Naive thymus-derived CD8-positive, alpha-beta T cell (primary cell): ENCODE measurements at regions of chr1 and their contacts with region 1.

Region 1: GRCh38 chr1:27357281-27358037 is 9.3 kb downstream of the MAP3K6 start:
- DNase-seq: peak; percentile 72 to 89 (median 82)
- ATAC-seq: peak; percentile 76 to 84
- H3K4me3 Mint-ChIP-seq: peak overlapping the region; percentile 74 to 86 (median 79)
- H3K27ac Mint-ChIP-seq: peak overlapping the region; percentile 53 to 95 (median 79)
- H3K4me1 Mint-ChIP-seq: peaks cover 16 to 52% (median 50%) of the 10 kb centered on the region in 4 donors
- H3K27me3 Mint-ChIP-seq: no peaks in the 10 kb centered on the region

Region 2: GRCh38 chr1:27292106-27292505 is 65.4 kb before region 1 on chr1:
- POLR2A ChIA-PET with region 1: no interaction called
- DNase-seq: no peak
- ATAC-seq: no peak
- H3K4me3 Mint-ChIP-seq: no peak overlapping the region
- H3K27ac Mint-ChIP-seq: peak overlapping the region in 2 of 10 donors; percentile 37 to 45
- H3K4me1 Mint-ChIP-seq: peaks cover 0 to 8% (median 6%) of the 10 kb centered on the region in 4 donors
- H3K27me3 Mint-ChIP-seq: no peaks in the 10 kb centered on the region

Region 3: GRCh38 chr1:27332536-27333281 is 24.8 kb before region 1 on chr1:
- POLR2A ChIA-PET with region 1: interaction called, 142 read pairs
- DNase-seq: peak; percentile 32 to 74 (median 62)
- ATAC-seq: peak; percentile 87 to 93
- H3K4me3 Mint-ChIP-seq: peak overlapping the region in 1 of 10 donors; percentile 38
- H3K27ac Mint-ChIP-seq: peak overlapping the region in 8 of 10 donors; percentile 21 to 78 (median 46)
- H3K4me1 Mint-ChIP-seq: peaks cover 18 to 46% (median 40%) of the 10 kb centered on the region in 4 donors
- H3K27me3 Mint-ChIP-seq: no peaks in the 10 kb centered on the region

Region 4: DNA sequence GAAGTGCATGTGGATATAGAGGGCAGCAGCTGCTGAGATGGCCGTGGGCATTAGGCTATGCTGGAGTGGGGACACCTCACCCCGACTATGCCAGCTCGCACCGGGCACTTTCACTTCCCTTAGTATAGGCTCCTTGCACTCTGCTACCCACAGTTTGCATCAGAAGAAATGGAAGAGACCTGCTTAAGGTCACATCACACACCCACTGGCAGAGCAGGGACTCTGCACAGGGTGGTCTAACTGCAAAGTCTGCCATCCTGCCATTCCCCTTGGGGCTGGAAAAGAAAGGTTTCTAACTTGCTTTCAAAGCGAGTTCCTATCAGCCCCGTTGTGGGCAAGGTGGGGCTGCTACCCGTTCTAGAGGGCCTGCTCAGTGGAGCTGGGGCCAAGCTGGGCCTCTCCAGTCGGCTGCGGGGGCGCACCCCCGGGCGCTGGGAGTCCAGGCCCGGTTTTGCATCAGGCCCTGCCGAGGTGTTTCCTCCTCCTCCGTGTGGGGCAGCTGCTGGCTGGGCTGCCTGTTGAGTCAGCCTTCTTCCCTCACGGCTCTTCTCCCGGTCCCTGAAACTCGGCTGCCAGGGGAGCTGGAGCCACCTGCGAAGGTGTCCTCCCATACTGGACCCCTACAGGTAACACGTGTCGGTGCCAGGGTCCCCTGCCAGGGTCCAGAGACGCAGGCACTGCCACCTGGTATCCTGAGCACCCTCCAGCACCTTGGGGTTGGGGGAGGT is 15.8 kb before region 1 on chr1 and contains the start of gene SYTL1:
- POLR2A ChIA-PET with region 1: interaction called, 142 read pairs
- DNase-seq: peak; percentile 50 to 78 (median 62)
- ATAC-seq: peak; percentile 66 to 73
- H3K4me3 Mint-ChIP-seq: peak within 1 kb of the TSS; percentile 87 to 100 (median 96)
- H3K27ac Mint-ChIP-seq: peak within 1 kb of the TSS; percentile 89 to 98 (median 96)
- H3K4me1 Mint-ChIP-seq: peaks cover 28 to 62% (median 57%) of the 10 kb centered on the region in 4 donors
- H3K27me3 Mint-ChIP-seq: no peaks in the 10 kb centered on the region
- polyA plus RNA-seq, gene SYTL1: 74.4 to 92.3 (median 91.9) TPM